ENCODE measurements at regions of chr10 and their contacts with region 1.

Region 1: DNA sequence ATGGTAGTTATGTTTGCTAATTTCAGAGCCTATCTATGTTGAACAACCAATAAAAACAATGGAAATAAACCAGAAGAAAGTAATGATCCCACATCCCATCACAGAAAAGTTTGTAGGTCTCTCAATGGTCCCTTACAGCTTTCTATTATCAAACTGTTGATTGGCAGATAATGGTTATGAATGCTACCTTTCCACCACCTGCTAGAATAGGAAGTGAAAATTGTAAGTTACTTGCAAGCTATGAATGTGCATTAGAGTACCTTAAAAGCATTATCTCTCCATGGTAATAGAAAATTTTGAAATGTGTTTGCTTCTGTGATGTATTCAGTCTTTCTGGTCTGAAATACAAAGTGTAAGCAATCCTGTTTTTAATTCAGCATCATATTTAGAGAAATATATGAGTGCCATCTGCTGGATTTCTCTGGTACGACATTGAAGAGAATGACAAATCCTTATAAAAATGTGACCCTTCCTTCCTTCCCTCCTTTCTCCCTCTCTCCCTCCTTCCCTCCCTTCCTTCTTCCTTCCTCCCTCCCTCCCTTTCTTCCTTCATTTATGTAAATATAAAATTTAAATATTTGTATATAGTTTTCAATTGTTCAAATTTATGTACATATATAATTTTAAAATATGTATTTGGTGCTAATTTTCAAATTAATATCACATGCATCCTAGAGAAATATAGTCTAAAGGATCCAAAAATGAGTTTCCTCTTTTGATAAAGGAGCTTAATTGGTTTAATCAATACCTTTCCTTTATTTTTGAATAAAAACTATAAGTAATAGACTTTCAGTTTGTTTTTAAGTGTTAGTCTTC is 41.4 kb upstream of the PNLIPRP3 start:
- DNase-seq: no peak
- ATAC-seq: peak in 1 of 4 donors; percentile 37
- H3K4me3 ChIP-seq: no peak overlapping the region
- H3K27ac ChIP-seq: no peak overlapping the region
- H3K4me1 ChIP-seq: no peaks in the 10 kb centered on the region
- H3K27me3 ChIP-seq: no peaks in the 10 kb centered on the region
- CTCF ChIP-seq: peak; percentile 60

Region 2: DNA sequence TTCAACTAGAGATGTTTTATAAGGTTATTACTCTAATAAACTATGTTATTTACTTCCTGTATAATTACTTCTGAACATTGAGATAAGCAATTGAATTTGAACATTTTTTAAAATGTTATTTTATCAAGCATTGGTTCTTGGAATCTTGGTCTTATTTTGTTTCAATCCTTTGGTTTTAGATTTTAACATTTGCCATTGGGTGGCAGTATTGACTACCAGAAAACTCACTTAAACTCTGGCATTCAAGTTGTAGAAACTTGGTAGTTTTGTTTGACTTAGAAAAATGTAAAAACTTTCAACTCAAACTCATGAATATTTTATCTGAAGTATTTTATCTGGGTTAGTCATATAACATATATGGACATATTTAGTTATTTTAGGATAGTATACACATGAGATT is 1244.9 kb before region 1 on chr10:
- intact Hi-C with region 1: loop called in 1 of 2 experiments (anchors 10 kb)
- DNase-seq: no peak
- ATAC-seq: no peak
- H3K4me3 ChIP-seq: no peak overlapping the region
- H3K27ac ChIP-seq: no peak overlapping the region
- H3K4me1 ChIP-seq: no peaks in the 10 kb centered on the region
- H3K27me3 ChIP-seq: no peaks in the 10 kb centered on the region
- CTCF ChIP-seq: peak; percentile 15

Region 3: DNA sequence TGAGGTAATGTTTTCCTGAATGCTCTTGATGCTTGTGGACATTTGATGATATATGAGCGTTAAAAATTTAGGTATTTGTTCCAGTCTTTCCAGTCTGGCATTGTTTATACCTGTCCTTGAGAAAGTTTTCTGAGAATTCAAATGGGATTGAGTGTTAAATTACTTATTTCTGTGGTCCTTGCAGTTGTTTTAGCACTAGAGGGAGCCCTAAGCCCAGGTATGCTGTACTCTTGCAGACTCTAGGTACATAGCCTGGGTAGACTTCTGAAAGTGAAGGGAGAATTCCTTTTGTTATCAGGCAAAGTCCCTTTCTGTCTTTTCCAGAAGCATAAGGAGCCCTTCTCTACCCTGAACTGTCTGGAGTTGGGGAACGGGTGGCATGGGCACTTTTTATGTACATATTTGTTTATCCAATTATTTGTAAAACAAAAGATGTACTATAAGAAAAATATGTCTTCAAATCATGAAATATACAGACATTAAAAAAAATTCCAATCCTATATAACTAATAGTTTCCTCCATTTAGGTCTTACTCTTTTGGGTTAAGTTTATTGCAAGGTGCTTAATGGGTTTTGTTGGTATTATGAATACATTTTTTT is 1030.9 kb before region 1 on chr10:
- intact Hi-C with region 1: loop called (anchors 5 kb)
- DNase-seq: no peak
- ATAC-seq: peak in 1 of 4 donors; percentile 41
- H3K4me3 ChIP-seq: no peak overlapping the region
- H3K27ac ChIP-seq: no peak overlapping the region
- H3K4me1 ChIP-seq: no peaks in the 10 kb centered on the region
- H3K27me3 ChIP-seq: no peaks in the 10 kb centered on the region
- CTCF ChIP-seq: peak; percentile 57

Region 4: DNA sequence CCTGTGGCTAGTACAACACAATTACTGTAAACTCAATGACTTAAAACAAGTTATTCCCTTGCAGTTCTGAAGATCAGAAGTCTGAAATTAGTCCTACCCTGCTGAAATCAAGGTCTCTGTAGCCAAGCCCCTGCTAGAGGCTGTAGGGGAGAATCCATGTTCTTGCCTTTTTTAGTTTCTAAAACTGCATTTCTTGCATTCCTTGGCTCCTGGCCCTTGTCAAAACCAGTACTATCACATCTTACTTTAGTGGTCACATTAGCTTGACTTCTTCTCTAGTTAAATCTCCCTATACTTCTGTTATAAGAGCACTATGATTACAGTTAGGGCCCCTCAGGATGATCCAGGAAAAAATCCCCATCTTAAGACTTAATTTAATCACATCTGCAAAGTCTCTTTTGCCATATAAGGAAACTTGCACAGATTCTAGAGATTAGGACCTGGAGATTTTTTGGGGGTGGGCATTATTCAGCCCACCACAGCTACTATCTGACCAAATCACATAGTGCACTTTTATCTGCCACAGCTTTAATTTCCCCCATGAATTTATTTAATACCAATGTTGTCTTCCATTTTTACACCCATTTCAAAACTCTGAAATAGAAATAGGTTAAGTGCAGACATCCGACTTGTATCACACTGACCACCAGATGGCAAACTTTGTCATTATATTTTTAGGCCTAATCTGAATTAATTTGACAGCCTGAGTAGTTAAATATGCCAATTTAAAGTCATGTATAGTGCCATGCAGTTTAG is 680.0 kb before region 1 on chr10:
- intact Hi-C with region 1: loop called in 1 of 2 experiments (anchors 10 kb)
- DNase-seq: no peak
- ATAC-seq: no peak
- H3K4me3 ChIP-seq: no peak overlapping the region
- H3K27ac ChIP-seq: no peak overlapping the region
- H3K4me1 ChIP-seq: no peaks in the 10 kb centered on the region
- H3K27me3 ChIP-seq: no peaks in the 10 kb centered on the region
- CTCF ChIP-seq: peak; percentile 30

Region 5: GRCh38 chr10:115795964-115796363 is 590.2 kb before region 1 on chr10:
- intact Hi-C with region 1: loop called in 1 of 2 experiments (anchors 5 kb)
- DNase-seq: no peak
- ATAC-seq: no peak
- H3K4me3 ChIP-seq: no peak overlapping the region
- H3K27ac ChIP-seq: no peak overlapping the region
- H3K4me1 ChIP-seq: no peaks in the 10 kb centered on the region
- H3K27me3 ChIP-seq: no peaks in the 10 kb centered on the region
- CTCF ChIP-seq: no peak